CD14-positive monocyte (primary cell): ENCODE measurements at regions of chr22 and their contacts with region 1.

Region 1: DNA sequence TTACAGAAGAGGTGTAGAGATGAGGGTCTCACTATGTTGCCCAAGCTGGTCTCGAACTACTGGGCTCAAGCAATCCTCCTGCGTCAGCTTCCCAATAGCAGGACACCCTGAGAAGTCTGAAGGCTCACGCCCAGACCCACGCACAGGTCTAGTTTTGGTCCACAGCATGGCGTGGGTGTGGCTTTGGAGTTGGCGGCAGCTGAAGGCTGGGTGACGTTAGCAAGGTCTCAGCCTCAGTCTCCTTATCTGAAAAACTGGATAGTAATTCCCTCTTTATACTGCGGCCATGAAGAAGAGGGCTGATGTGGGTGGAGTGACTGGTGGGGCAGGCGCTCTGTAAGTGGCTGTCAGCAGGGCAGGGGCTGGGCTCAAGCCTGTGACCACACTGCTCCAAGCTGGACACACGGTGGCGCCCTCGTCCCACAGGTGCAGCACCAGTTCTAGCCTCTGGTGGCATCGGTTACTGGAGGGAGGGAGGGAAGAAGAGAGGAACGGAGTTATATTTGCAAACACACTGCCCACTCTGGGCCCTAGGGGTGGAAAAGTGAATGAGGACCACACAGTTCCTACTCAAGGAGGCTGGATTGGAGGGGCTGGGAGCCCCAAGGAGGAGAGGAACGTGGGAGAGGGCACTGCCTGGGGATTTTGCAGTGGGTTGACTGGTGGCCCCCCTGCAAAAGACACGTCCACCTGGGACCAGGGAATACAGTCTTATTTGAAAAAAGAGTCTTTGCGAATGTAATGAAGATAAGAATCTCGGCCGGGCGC is 19.6 kb upstream of the CARD10 start:
- DNase-seq: peak; percentile 89 to 91 (median 90)
- H3K4me3 ChIP-seq: peak overlapping the region in 1 of 3 experiments; percentile 26
- H3K4me3 Mint-ChIP-seq: peak overlapping the region; percentile 6 to 78
- H3K27ac ChIP-seq: peak overlapping the region in 1 of 2 donors; percentile 14
- H3K27ac Mint-ChIP-seq: peak overlapping the region; percentile 62 to 86 (median 80)
- H3K4me1 ChIP-seq: peaks cover 32 to 49% of the 10 kb centered on the region in 2 donors
- H3K4me1 Mint-ChIP-seq: peaks cover 45% of the 10 kb centered on the region
- H3K27me3 ChIP-seq: no peaks in the 10 kb centered on the region
- H3K27me3 Mint-ChIP-seq: peaks cover 4 to 5% (median 4%) of the 10 kb centered on the region in 3 donors
- CTCF ChIP-seq: peak; percentile 96

Region 2: GRCh38 chr22:37566903-37567820 is 28.4 kb after region 1 on chr22:
- intact Hi-C with region 1: loop called (anchors 1 to 2 kb)
- DNase-seq: peak; percentile 68 to 80 (median 77)
- H3K4me3 ChIP-seq: peak overlapping the region in 1 of 3 experiments; percentile 37
- H3K4me3 Mint-ChIP-seq: peak overlapping the region in 1 of 2 donors; percentile 64
- H3K27ac ChIP-seq: peak overlapping the region in 1 of 2 donors; percentile 25
- H3K27ac Mint-ChIP-seq: peak overlapping the region in 6 of 7 donors; percentile 33 to 79 (median 62)
- H3K4me1 ChIP-seq: peaks cover 44 to 83% of the 10 kb centered on the region in 2 donors
- H3K4me1 Mint-ChIP-seq: peaks cover 60% of the 10 kb centered on the region
- H3K27me3 ChIP-seq: peaks cover 0 to 6% of the 10 kb centered on the region in 2 donors
- H3K27me3 Mint-ChIP-seq: peaks cover 17 to 29% (median 26%) of the 10 kb centered on the region in 3 donors
- CTCF ChIP-seq: peak; percentile 98

Region 3: DNA sequence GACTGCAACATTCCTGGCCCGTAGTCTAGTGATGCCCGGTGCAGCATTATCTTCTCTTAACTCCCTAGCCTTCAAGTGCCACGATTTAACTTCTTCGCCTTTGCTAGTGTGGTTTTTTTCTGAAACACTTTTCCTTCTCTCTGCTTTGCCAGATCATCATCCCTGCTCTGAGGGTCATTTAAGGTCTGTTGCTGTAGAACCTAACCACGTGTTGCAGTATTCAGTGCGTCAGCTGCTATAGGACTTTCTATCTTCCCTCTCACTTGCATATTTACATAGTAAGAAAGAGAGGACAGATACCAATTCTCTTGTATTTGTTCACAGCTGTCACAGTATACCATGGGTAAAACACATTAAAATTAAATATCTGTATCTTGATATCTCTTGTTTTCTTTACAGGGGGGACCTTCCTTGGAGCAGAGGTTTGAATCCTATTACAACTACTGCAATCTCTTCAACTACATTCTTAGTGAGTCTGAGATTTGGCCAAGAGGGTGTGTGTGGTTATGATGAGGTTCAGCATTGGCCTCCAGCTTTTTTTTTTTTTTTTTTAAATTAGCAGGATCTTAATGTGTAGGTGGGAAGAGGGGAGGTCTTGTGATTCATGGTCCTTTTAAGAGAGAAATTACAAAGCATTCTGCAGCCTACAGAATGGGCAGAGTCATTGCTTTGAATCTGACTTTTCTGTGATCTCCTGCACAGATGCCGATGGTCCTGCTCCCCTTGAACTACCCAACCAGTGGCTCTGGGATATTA is 324.0 kb after region 1 on chr22:
- intact Hi-C with region 1: loop called (anchors 2 to 5 kb)
- DNase-seq: no peak
- H3K4me3 ChIP-seq: no peak overlapping the region
- H3K4me3 Mint-ChIP-seq: no peak overlapping the region
- H3K27ac ChIP-seq: no peak overlapping the region
- H3K27ac Mint-ChIP-seq: no peak overlapping the region
- H3K4me1 ChIP-seq: no peaks in the 10 kb centered on the region
- H3K4me1 Mint-ChIP-seq: no peaks in the 10 kb centered on the region
- H3K27me3 ChIP-seq: no peaks in the 10 kb centered on the region
- H3K27me3 Mint-ChIP-seq: no peaks in the 10 kb centered on the region
- CTCF ChIP-seq: no peak